ENCODE measurements at regions of chr16 and their contacts with region 1.

Region 1: DNA sequence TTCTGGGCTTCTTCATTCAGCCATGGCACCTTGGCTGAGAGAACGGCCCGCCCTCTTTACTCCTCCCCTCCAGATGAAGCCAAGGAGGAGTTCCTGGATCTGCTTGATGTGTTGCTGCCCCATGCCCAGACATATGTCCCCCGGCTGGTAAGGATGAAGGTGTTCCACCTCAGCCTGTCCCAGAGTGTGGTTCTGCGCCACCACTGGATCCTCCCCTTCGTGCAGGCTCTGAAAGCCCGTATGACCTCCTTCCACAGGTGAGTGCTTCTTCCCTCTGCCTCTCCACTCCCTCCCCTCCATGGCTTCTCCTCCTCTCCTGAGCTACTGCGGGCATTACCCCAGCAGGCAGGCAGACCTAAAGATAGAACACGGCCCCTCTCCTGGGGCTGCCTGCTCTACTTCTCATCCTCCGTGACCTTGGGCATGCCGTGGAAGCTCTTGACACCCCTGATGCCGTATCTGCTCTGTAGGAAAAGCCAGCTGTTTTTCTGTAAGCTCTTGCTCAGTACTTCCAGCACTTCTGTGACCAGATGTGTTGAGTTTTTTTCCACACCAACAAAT is 8.7 kb downstream of the USB1 start:
- DNase-seq: no peak
- H3K4me3 ChIP-seq: no peak overlapping the region
- H3K27ac ChIP-seq: no peak overlapping the region
- H3K4me1 ChIP-seq: 0 out of 2 replicates have a peak, but pooled peaks cover 8% of the 10 kb centered on the region
- H3K27me3 ChIP-seq: no peaks in the 10 kb centered on the region

Region 2: DNA sequence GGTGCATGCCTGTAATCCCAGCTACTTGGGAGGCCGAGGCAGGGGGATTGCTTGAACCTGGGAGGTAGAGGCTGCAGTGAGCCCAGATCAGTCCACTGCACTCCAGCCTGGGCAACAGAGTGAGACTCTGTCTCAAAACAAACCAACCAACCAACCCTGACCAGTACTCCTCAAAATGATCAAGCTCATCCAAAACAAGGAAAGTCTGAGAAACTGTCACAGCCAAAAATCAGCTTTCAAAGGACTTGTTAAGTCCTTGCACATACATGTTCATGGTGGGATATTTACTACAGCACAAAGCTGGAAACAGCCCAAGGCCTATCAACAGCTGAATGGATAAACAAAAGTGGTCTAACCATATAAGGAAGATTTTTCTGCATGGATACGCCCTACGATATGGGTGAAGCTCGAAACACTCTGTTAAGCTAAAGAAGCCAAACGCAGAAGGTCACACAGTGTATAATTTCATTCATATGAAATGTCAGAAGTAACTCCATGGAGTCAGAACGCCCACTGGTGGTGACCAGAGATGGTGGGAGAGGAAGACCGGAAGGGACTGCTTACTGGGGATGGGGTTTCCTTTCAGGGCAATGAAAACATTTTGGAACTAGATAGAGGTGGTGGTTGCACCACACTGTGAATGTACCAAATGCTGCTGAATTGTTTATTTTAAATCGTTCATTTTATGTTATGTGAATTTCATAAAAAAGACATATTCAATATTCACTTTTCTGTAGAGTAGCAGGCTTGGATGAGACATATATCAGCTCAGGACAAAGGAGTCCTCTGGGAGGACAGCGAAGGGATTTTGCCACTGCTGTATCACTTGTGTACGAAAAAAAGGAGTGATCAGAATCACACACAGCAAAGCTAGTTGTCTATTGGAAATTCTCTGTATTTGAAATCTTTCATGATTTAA is 587.7 kb before region 1 on chr16:
- in situ Hi-C with region 1: no loop called
- DNase-seq: peak; percentile 65
- H3K4me3 ChIP-seq: no peak overlapping the region
- H3K27ac ChIP-seq: no peak overlapping the region
- H3K4me1 ChIP-seq: peaks cover 6% of the 10 kb centered on the region; the same call in 1 of the 2 replicates
- H3K27me3 ChIP-seq: no peaks in the 10 kb centered on the region

Region 3: GRCh38 chr16:57899771-57900661 is 109.9 kb before region 1 on chr16:
- in situ Hi-C with region 1: loop called (anchors 5 kb)
- DNase-seq: peak; percentile 73
- H3K4me3 ChIP-seq: no peak overlapping the region
- H3K27ac ChIP-seq: no peak overlapping the region
- H3K4me1 ChIP-seq: no peaks in the 10 kb centered on the region
- H3K27me3 ChIP-seq: peaks cover 8% of the 10 kb centered on the region; the same call in 1 of the 2 replicates

Measured in GM23248 (cell line).